ENCODE measurements at regions of chr9 and their contacts with region 1.

Region 1: DNA sequence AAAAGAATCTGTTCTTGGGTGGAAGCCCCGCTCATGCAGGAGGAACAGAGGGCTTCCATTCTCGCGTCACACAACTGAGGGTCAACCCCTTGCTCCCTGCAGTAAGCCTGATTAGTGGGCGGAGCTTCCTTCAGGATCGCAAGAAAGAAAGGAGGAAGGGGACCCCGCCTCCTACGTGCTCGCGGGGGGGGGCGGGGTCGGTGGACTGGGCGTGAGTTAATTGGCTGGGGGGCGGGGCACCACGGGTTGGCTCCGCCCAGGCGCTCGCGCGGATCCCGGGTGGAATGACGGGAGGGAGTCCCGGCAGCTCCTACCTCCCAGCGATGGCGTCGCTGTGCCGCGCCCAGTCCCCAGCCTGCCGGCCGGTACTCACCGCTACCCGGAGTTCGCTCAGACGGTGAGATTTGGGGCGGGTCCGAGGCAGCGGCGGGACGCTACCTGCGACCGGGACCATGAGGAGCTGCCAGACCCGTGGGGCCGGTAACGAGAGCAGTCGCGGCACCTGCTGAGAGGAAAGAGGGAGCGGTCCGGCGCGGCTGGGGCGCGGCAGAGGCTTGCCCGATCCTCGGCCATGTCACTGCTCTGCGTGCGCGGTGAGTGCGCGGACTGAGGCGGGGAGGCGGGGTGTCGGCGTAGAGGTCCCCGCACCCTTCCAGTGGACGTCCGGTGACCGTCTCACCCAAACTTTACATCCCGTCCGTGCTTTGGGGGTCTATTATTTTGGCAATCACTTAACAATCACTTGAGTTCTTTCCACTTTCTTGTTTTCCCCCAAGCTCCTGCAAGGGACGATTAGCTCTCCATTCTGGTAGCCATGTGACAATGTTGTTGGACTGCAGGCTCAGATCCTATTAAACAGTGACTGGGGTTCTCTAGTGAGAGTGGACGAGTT is at the start of gene UNC13B:
- DNase-seq: peak; percentile 99
- H3K4me3 ChIP-seq: peak within 1 kb of the TSS; percentile 70 to 86
- H3K27ac ChIP-seq: peak within 1 kb of the TSS; percentile 46 to 88; a peak in 3 of 4 replicates
- H3K4me1 ChIP-seq: peaks cover 3 to 5% of the 10 kb centered on the region in 2 experiments; a peak in 1 of 4 replicates
- H3K27me3 ChIP-seq: no peaks in the 10 kb centered on the region
- CTCF ChIP-seq: no peak; the same call in 1 of the 2 replicates
- EP300 ChIP-seq: no peak
- RAD21 ChIP-seq: no peak
- polyA plus RNA-seq, gene UNC13B: 8.1 and 9.8 TPM in 2 replicates

Region 2: GRCh38 chr9:35258676-35259474 is 96.9 kb after region 1 on chr9:
- CTCF ChIA-PET with region 1: interaction called, 17 read pairs
- POLR2A ChIA-PET with region 1: no interaction called
- DNase-seq: peak; percentile 42
- H3K4me3 ChIP-seq: no peak overlapping the region
- H3K27ac ChIP-seq: no peak overlapping the region
- H3K4me1 ChIP-seq: no peaks in the 10 kb centered on the region
- H3K27me3 ChIP-seq: no peaks in the 10 kb centered on the region
- CTCF ChIP-seq: peak; percentile 72
- EP300 ChIP-seq: no peak
- RAD21 ChIP-seq: peak; percentile 83